PC-3 (cell line): ENCODE measurements at regions of chr3 and their contacts with region 1.

Region 1: GRCh38 chr3:179653096-179653797 is 407 bp downstream of the USP13 start:
- DNase-seq: peak; percentile 71
- ATAC-seq: peak; percentile 67
- H3K4me3 ChIP-seq: peak overlapping the region; percentile 91
- H3K27ac ChIP-seq: peak overlapping the region; percentile 48
- H3K4me1 ChIP-seq: peaks cover 16% of the 10 kb centered on the region
- H3K27me3 ChIP-seq: no peaks in the 10 kb centered on the region
- CTCF ChIP-seq: no peak; the same call in 1 of the 2 replicates

Region 2: GRCh38 chr3:179604321-179605078 is 48.7 kb before region 1 on chr3 and contains the starts of genes MRPL47 and NDUFB5:
- CTCF ChIA-PET with region 1: interaction called, 8 read pairs
- POLR2A ChIA-PET with region 1: no interaction called
- intact Hi-C with region 1: loop called (anchors 2 kb)
- DNase-seq: peak; percentile 97
- ATAC-seq: peak; percentile 100
- H3K4me3 ChIP-seq: peak within 1 kb of the TSS; percentile 90
- H3K27ac ChIP-seq: peak within 1 kb of the TSS; percentile 59
- H3K4me1 ChIP-seq: peaks cover 13% of the 10 kb centered on the region
- H3K27me3 ChIP-seq: no peaks in the 10 kb centered on the region
- CTCF ChIP-seq: no peak
- total RNA-seq, gene MRPL47: 68.0 and 77.0 TPM in 2 replicates
- total RNA-seq, gene NDUFB5: 125 and 126 TPM in 2 replicates

Region 3: DNA sequence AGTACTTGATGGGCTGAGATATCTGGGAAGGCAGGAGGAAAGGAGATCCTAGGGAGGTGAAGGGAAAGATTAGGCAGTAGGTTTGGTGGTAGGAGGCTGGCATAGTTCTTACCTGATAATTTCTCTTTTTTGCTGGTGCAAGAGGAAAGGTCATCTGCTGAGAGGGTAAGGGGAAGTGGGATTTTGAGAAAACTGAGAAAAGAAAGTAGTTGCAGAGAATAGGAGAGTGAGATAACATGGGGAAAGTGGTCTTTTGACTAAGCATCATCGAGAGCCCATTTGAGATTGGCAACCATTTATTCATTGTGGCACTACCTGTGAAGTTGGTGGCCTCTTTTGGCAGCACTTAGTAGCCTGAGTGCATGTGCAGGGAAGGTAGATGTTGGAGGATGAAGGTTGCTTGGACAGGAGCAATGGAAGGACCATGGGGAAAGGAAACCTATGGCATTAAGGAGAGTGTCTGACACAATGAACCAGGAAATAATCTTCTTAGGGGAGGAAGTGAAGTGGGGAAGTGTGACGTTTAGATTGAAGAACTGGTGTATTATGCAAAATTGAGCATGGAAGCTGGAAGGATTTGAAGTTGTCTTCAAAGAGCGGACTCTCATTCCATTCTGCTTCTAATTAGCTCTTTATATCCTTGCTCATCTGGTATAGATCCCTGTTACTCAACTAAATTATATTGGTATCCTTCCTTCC is 22.3 kb before region 1 on chr3:
- CTCF ChIA-PET with region 1: no interaction called
- POLR2A ChIA-PET with region 1: no interaction called
- intact Hi-C with region 1: no loop called
- DNase-seq: no peak
- ATAC-seq: no peak
- H3K4me3 ChIP-seq: no peak overlapping the region
- H3K27ac ChIP-seq: no peak overlapping the region
- H3K4me1 ChIP-seq: no peaks in the 10 kb centered on the region
- H3K27me3 ChIP-seq: no peaks in the 10 kb centered on the region
- CTCF ChIP-seq: no peak

Region 4: GRCh38 chr3:179688850-179689249 is 35.6 kb after region 1 on chr3:
- CTCF ChIA-PET with region 1: interaction called, 6 read pairs
- POLR2A ChIA-PET with region 1: no interaction called
- intact Hi-C with region 1: loop called (anchors 2 kb)
- DNase-seq: peak; percentile 80
- ATAC-seq: peak; percentile 95
- H3K4me3 ChIP-seq: no peak overlapping the region
- H3K27ac ChIP-seq: no peak overlapping the region
- H3K4me1 ChIP-seq: peaks cover 13% of the 10 kb centered on the region
- H3K27me3 ChIP-seq: no peaks in the 10 kb centered on the region
- CTCF ChIP-seq: no peak

Region 5: DNA sequence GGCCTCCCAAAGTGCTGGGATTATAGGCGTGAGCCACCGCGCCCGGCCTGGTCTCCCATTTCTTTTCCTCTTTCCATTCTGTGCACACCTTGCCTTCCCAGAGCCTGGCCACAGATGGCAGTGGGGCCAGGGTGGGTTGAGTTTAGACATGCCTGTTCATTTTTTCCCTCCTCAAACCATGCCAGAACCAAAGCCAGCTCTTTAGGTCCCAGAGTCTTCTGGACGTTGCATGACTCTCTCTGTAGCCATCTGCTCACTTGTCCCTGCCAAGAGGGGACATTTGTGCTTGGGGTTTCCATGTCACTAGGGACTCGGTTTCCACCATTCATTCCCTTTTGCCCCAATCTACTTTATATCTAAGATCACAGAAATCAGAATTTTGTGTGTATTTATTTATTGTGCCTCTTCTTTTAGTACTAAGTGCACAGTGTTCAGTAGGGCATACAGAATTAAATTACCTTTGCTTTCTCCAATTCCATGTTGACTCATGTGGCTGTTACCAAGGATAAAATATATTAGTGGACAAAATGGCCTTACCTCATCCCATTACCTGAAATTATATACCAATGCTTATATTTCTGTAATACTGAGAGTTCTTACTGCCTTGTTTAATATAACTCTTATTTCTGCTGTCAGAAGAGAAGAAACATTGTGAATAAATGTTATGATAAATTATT is 49.2 kb after region 1 on chr3:
- CTCF ChIA-PET with region 1: no interaction called
- POLR2A ChIA-PET with region 1: no interaction called
- intact Hi-C with region 1: no loop called
- DNase-seq: no peak
- ATAC-seq: no peak
- H3K4me3 ChIP-seq: no peak overlapping the region
- H3K27ac ChIP-seq: no peak overlapping the region
- H3K4me1 ChIP-seq: no peaks in the 10 kb centered on the region
- H3K27me3 ChIP-seq: no peaks in the 10 kb centered on the region
- CTCF ChIP-seq: no peak

Region 6: DNA sequence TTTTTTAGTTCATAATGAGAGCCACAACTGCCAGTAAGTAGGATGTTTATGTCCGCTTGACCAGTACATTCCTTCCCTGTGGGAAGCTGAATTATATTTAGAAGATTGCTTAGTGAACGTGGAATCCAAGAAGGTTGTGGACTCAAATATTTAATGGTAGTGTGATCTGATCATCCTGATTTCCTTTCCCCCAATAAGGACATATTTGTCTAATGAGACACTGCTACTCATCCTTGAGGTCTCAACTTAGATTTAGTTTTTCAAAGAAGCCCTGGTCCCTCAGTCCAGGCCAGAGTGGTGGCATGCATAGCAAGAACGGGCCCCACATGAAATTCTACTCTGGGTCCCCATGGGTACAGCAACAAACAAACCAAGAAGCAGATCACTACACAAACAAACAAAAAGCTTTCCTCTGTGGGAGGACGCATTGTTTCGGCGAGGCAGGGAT is 60.4 kb after region 1 on chr3:
- CTCF ChIA-PET with region 1: no interaction called
- POLR2A ChIA-PET with region 1: no interaction called
- intact Hi-C with region 1: no loop called
- DNase-seq: no peak
- ATAC-seq: no peak
- H3K4me3 ChIP-seq: no peak overlapping the region
- H3K27ac ChIP-seq: no peak overlapping the region
- H3K4me1 ChIP-seq: no peaks in the 10 kb centered on the region
- H3K27me3 ChIP-seq: no peaks in the 10 kb centered on the region
- CTCF ChIP-seq: no peak

Region 7: DNA sequence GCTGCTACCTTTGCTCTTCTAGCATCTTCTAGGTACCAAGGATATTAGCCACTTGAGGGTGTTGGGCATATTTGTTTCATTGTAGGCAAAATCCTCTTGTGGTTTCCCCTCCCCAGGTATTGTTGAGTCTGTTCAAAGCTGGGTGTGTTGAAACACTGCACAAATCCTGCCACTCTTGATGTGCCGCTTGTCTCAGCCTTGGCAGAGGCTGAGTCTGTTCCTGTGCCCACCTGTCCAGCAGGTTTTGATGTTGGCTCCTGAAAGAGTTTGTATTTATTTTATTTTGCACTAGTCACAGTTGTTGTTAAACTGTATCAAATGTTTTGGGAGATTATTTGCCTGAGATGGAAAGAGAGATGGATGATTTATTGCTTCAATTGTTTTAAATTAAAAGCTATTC is 135.7 kb after region 1 on chr3:
- CTCF ChIA-PET with region 1: no interaction called
- POLR2A ChIA-PET with region 1: no interaction called
- intact Hi-C with region 1: no loop called
- DNase-seq: peak; percentile 50
- ATAC-seq: no peak
- H3K4me3 ChIP-seq: no peak overlapping the region
- H3K27ac ChIP-seq: no peak overlapping the region
- H3K4me1 ChIP-seq: no peaks in the 10 kb centered on the region
- H3K27me3 ChIP-seq: no peaks in the 10 kb centered on the region
- CTCF ChIP-seq: no peak

Region 8: DNA sequence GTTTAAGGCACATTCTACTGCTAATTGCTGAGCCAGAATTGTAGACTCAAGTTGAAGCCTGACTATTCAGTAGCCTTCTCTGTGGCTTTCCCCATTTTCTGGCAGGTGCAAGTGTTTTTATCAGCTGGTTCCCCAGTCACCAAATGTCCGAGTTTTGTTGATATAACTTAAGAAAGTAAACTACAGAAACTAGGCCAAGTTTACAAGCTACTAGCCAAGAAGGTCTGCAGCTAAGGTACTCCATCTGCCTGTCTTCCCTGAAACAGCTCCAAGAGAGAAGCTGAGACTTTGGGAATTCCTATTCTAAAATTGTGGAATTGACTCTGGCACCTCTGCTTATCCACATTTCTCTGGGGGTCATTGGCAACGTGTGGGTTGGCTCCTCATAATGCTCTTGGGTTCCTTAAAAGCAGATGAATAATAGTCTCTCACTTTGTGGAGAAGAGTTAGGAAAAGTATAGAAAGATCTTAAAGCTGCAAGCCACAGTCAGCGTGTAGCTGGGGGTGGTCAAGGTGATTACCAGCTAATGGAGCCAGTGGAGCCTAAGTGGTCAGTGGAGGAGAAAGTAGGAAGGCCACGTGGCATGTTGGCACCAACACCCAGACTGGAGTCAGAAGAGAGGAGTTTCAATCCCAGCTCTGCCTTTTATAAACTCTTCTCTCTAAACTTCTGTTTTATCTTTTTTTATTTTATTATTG is 254.7 kb after region 1 on chr3:
- CTCF ChIA-PET with region 1: interaction called, 14 read pairs
- POLR2A ChIA-PET with region 1: no interaction called
- intact Hi-C with region 1: no loop called
- DNase-seq: no peak
- ATAC-seq: no peak
- H3K4me3 ChIP-seq: no peak overlapping the region
- H3K27ac ChIP-seq: no peak overlapping the region
- H3K4me1 ChIP-seq: no peaks in the 10 kb centered on the region
- H3K27me3 ChIP-seq: no peaks in the 10 kb centered on the region
- CTCF ChIP-seq: no peak

Region 9: DNA sequence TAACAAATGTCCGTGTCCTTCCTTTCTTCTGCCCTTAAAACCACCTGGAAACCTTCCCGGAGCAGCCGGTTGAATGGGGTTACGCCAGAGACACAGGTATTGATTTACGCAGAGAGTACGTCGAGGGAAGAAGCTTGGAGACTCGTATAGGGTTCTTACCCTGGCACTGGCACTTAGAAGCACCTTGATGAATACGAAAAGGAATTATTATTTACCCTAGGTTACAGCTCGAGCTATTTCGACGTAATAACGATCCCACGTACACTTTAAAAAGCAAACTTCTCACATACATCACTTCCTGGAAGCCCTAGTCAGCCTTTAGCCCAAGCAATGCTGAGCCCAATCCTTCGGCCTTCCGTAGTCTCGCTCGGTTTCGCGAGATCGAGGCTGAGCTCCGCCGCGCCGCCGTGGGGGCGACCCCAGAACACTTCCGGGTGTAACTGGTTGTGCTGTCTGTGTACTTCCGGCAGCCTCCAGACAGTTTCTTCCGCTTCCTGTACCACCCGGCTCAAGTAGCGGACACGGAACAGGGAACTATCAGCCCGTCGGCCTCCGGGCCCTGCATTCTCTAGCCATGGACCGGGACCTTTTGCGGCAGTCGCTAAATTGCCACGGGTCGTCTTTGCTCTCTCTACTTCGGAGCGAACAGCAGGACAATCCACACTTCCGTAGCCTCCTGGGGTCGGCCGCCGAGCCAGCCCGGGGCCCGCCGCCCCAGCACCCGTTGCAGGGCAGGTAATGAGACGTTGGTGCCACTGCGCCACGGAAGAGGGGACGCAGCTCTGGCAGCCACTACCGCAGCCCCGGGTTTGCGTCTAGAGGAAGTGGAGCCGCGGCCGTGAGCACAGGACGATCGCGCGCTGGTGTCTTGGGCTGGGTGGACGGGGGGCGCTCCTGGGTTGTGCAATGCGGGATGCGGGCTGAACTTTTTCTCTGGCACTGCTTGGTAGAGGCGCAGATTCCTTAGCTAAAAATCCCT is 948.7 kb after region 1 on chr3 and contains the start of gene TTC14:
- CTCF ChIA-PET with region 1: no interaction called
- POLR2A ChIA-PET with region 1: no interaction called
- intact Hi-C with region 1: loop called (anchors 5 kb)
- DNase-seq: peak; percentile 96
- ATAC-seq: peak; percentile 96
- H3K4me3 ChIP-seq: peak within 1 kb of the TSS; percentile 90
- H3K27ac ChIP-seq: peak within 1 kb of the TSS; percentile 62
- H3K4me1 ChIP-seq: peaks cover 13% of the 10 kb centered on the region
- H3K27me3 ChIP-seq: no peaks in the 10 kb centered on the region
- CTCF ChIP-seq: peak; percentile 25; the same call in 1 of the 2 replicates
- total RNA-seq, gene TTC14: 17.2 and 18.0 TPM in 2 replicates